Mammary epithelial cell (primary cell): ENCODE measurements at regions of chr11 and their contacts with region 1.

Region 1: GRCh38 chr11:16945671-16946469 is 68.3 kb downstream of the PLEKHA7 start:
- DNase-seq: peak; percentile 65
- H3K4me3 ChIP-seq: no peak overlapping the region
- H3K27ac ChIP-seq: no peak overlapping the region
- H3K4me1 ChIP-seq: peaks cover 7% of the 10 kb centered on the region
- H3K27me3 ChIP-seq: no peaks in the 10 kb centered on the region
- CTCF ChIP-seq: peak; percentile 75 to 93

Region 2: DNA sequence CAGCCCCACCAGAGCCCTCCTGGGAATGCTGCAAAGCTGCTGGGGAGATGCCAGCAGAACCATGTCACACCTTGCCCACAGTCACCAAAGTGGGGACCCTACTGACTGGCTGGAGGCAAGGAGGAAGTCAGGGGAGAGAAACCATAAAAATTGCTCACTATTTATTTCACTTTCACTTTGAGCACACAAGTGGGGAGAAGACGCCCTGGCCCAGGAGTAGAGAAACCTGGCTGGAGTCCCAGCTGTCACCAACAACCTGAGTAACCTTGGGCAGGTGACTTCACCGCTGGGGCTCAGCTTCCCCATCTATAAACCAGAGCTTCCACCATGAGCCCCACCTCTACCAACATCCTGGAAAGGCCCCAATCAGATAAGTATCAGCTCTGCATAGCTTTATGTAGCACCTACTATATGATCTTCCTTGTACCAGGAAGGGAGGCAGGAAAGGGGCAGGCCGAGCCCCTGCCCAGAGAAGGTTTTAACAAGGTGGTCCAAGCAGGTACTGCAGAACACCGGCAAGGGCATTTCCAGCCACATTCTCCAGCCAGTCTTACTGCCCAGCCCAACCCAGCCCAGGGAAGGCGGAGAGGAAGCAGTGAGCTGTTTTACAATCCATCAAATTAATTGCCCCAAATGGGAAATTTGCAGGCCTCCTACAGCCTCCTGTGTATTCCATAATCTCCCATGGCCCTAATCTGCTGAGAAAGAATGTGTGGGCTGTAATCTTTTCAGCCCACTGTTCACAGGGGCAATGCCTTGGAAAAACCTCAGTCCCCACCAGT is 40.8 kb after region 1 on chr11:
- CTCF ChIA-PET with region 1: no interaction called
- dilution Hi-C with region 1: loop called (anchors 5 kb)
- in situ Hi-C with region 1: no loop called
- intact Hi-C with region 1: no loop called
- DNase-seq: no peak
- H3K4me3 ChIP-seq: no peak overlapping the region
- H3K27ac ChIP-seq: no peak overlapping the region
- H3K4me1 ChIP-seq: peaks cover 11% of the 10 kb centered on the region
- H3K27me3 ChIP-seq: no peaks in the 10 kb centered on the region
- CTCF ChIP-seq: no peak

Region 3: DNA sequence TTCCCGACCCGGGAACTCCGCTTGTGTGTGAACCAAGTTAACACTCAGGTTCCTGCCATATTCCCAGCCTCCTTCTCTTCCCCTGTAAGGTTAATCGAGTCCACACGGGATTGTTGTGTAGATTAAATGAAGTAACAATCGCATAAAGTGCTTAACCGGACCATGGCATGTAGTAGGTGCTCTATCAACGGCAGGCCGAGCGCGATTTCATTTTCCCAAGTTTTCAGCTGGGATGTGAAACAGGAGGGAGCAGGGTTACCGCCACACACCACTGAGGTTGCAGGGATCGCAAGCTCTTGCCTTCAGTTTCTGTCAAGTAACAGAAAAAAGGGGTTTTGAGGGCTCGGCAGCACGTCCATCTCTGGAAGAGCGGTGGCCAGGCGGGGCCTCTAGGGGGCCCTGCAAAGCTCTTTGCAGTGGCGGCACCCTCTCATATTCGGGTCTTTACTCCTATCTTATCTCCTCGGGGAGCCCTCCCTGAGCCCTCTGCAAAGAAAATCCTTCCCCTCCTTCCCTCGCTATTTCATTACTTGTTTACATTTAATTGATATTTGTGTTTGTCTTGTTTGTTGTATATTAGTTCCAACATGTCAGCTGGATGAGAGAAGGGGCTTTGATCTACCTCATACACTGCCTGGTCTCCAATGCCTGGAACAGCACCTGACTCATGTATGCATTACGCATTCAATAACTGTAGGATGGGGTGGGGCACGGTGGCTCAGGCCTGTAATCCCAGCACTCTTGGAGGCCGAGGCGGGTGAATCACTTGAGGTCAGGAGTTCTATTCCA is 69.2 kb after region 1 on chr11:
- CTCF ChIA-PET with region 1: no interaction called
- dilution Hi-C with region 1: loop called (anchors 5 kb)
- in situ Hi-C with region 1: no loop called
- intact Hi-C with region 1: no loop called
- DNase-seq: no peak
- H3K4me3 ChIP-seq: peak overlapping the region in 1 of 3 experiments; percentile 4
- H3K27ac ChIP-seq: no peak overlapping the region
- H3K4me1 ChIP-seq: peaks cover 15% of the 10 kb centered on the region
- H3K27me3 ChIP-seq: peaks cover 23% of the 10 kb centered on the region
- CTCF ChIP-seq: no peak

Region 4: GRCh38 chr11:17077520-17078401 is 131.9 kb after region 1 on chr11 and contains the start of gene RPS13:
- CTCF ChIA-PET with region 1: no interaction called
- dilution Hi-C with region 1: no loop called
- in situ Hi-C with region 1: no loop called
- intact Hi-C with region 1: loop called (anchors 5 kb)
- DNase-seq: peak; percentile 99
- H3K4me3 ChIP-seq: peak within 1 kb of the TSS; percentile 69 to 89 (median 81)
- H3K27ac ChIP-seq: peak within 1 kb of the TSS; percentile 86
- H3K4me1 ChIP-seq: peaks cover 25% of the 10 kb centered on the region
- H3K27me3 ChIP-seq: no peaks in the 10 kb centered on the region
- CTCF ChIP-seq: no peak
- total RNA-seq, gene RPS13: 475 to 878 TPM

Region 5: GRCh38 chr11:17207317-17208258 is 261.7 kb after region 1 on chr11 and contains the start of gene PIK3C2A:
- CTCF ChIA-PET with region 1: no interaction called
- dilution Hi-C with region 1: no loop called
- in situ Hi-C with region 1: no loop called
- intact Hi-C with region 1: loop called (anchors 10 kb)
- DNase-seq: peak; percentile 94
- H3K4me3 ChIP-seq: peak within 1 kb of the TSS; percentile 62 to 90 (median 88)
- H3K27ac ChIP-seq: peak within 1 kb of the TSS; percentile 95
- H3K4me1 ChIP-seq: peaks cover 14% of the 10 kb centered on the region
- H3K27me3 ChIP-seq: no peaks in the 10 kb centered on the region
- CTCF ChIP-seq: no peak
- total RNA-seq, gene PIK3C2A: 57.7 to 59.3 TPM

Region 6: DNA sequence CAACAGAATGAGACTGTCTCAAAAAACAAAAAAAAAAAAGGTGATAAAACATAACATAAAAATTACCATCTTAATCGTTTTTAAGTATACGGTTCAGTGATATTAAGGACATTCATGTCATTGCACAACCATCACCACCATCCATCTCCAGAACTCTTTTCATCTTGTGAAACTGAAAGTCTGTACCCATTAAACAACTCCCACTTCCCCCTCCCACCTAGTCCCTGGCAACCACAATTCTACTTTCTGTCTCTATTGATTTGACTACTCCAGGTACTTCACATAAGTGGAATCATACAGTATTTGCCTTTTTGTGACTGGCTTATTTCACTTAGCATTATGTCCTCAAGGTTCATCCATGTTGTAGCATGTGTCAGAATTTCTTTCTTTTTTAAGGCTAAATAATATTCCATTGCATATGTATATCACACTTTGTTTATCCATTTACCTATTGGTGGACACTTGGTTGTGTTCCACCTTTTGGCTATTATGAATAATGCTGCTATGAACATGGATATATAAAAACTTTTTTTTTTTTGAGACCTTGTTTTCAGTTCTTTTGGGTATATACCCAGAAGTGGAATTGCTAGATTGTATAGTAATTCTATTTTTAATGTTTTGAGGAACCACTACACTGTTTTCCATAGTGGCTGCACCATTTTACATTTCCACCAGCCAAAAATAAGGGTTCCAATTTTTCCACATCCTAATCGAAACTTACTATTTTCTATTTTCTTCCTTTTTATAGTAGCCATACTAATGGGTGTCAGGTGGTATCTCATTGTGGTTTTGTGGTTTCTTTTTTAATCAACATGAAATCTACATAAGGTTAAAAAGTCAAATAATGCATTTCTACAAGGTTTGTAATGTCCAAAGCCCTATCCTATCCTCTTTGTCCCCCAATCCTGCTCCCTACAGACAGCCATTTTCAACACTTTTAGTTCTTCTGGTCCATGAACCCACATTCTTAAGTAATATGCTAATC is 285.3 kb after region 1 on chr11:
- CTCF ChIA-PET with region 1: no interaction called
- dilution Hi-C with region 1: no loop called
- in situ Hi-C with region 1: no loop called
- intact Hi-C with region 1: loop called (anchors 1 kb)
- DNase-seq: no peak
- H3K4me3 ChIP-seq: no peak overlapping the region
- H3K27ac ChIP-seq: no peak overlapping the region
- H3K4me1 ChIP-seq: no peaks in the 10 kb centered on the region
- H3K27me3 ChIP-seq: no peaks in the 10 kb centered on the region
- CTCF ChIP-seq: no peak

Region 7: DNA sequence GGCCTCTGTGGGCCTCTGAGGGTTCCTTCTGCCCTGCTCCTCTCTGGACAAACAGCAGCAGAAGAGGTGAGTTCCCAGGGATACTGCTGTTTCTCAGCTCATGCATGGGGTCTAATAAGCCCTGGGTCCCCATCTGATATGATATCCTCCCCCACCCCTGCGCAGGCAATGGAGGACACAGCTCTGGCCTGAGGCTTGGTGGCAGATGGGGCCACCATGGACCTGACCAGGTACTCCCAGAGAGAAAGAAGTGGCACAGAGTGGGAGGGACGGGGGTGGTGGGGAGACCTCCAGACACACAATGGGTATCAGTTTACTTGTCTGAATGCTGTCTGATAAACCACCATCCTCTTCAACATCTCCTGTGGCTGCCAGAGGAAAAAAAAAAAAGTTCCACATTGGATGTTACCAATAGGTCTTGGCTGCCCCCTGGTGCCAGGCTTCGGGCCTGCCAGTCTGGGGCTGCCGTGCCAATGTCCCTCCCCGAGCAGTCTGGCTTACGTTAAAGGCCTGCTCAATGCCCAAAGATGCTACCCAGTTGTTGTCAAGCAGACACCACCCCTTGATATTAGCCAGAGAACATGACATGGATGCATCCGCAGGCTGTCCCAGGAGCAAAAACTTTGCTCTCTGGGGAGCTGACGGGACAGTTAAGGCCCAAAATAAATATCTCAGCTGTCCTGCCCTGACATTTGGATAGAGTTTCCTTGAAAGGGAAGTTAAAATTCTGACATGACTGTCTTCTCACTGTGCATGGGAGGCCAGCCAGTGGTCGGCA is 558.6 kb after region 1 on chr11:
- CTCF ChIA-PET with region 1: no interaction called
- dilution Hi-C with region 1: no loop called
- in situ Hi-C with region 1: loop called in 1 of 2 experiments (anchors 25 kb)
- intact Hi-C with region 1: loop called (anchors 1 kb)
- DNase-seq: peak; percentile 48
- H3K4me3 ChIP-seq: no peak overlapping the region
- H3K27ac ChIP-seq: no peak overlapping the region
- H3K4me1 ChIP-seq: no peaks in the 10 kb centered on the region
- H3K27me3 ChIP-seq: no peaks in the 10 kb centered on the region
- CTCF ChIP-seq: peak; percentile 93 to 96